Activated T-helper 2 cell treated with anti-CD3 and anti-CD28 coated beads, Interferon-gamma antibody, Interleukin-2, Interleukin-4, amounts not matched to agents 10 μg/mL and 5 μg/mL and 100 μg/mL, durations not matched to agents 14 hours and 24 hours and 36 hours (primary cell): ENCODE measurements at regions of chr12 and their contacts with region 1.

Region 1: DNA sequence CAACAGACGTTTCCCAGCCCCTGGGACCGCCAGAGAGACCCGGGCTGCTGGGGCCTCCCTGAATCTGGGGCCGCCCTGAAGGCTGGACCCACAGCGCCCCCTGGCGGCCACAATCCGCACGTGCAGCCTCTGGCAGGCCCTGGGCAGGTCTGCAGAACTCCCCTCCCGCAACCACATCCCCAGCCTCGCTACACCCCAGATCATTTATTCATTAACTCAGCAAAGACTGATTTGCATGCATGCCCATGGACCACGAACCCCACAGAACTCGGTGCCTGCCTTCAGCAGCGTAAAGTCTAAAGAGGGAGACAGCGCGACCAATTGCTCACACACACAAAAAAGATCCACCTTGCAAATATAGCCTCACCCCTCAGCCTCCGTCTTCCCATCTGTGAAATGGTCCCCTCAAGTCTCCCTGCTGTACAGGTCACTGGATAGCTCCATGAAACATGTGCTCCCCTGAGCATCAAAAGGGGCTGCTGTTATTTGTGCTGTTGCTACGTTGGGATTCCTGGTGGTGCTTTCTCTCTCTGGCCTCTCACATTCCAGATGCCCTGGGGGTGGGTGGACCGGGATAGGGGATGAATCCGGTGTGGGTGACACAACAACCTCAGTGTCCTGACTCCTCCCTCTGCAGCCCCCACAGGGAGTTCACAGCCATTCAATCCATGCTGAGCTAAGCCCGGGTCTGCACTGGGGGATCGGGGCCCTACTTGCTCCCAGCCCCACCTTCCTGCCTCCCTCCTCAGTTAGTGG is 96.4 kb downstream of the SCARB1 start:
- DNase-seq: peak; percentile 73
- H3K4me3 Mint-ChIP-seq: no peak overlapping the region
- H3K27ac Mint-ChIP-seq: no peak overlapping the region
- H3K4me1 Mint-ChIP-seq: peaks cover 23% of the 10 kb centered on the region
- H3K27me3 Mint-ChIP-seq: peaks cover 24% of the 10 kb centered on the region

Region 2: GRCh38 chr12:124036674-124037109 is 730.6 kb before region 1 on chr12:
- intact Hi-C with region 1: loop called (anchors 1 kb)
- DNase-seq: peak; percentile 16
- H3K4me3 Mint-ChIP-seq: no peak overlapping the region
- H3K27ac Mint-ChIP-seq: no peak overlapping the region
- H3K4me1 Mint-ChIP-seq: no peaks in the 10 kb centered on the region
- H3K27me3 Mint-ChIP-seq: peaks cover 24% of the 10 kb centered on the region

Region 3: GRCh38 chr12:124388679-124389536 is 378.3 kb before region 1 on chr12:
- intact Hi-C with region 1: loop called (anchors 5 kb)
- DNase-seq: peak; percentile 43
- H3K4me3 Mint-ChIP-seq: peak overlapping the region; percentile 21
- H3K27ac Mint-ChIP-seq: no peak overlapping the region
- H3K4me1 Mint-ChIP-seq: peaks cover 22% of the 10 kb centered on the region
- H3K27me3 Mint-ChIP-seq: no peaks in the 10 kb centered on the region

Region 4: GRCh38 chr12:124567661-124568373 is 199.4 kb before region 1 on chr12:
- intact Hi-C with region 1: loop called (anchors 2 kb)
- DNase-seq: peak; percentile 75
- H3K4me3 Mint-ChIP-seq: peak overlapping the region; percentile 78
- H3K27ac Mint-ChIP-seq: peak overlapping the region; percentile 78
- H3K4me1 Mint-ChIP-seq: peaks cover 10% of the 10 kb centered on the region
- H3K27me3 Mint-ChIP-seq: peaks cover 3% of the 10 kb centered on the region

Region 5: GRCh38 chr12:124680863-124681778 is 86.1 kb before region 1 on chr12:
- intact Hi-C with region 1: loop called (anchors 5 kb)
- DNase-seq: peak; percentile 16
- H3K4me3 Mint-ChIP-seq: no peak overlapping the region
- H3K27ac Mint-ChIP-seq: no peak overlapping the region
- H3K4me1 Mint-ChIP-seq: peaks cover 30% of the 10 kb centered on the region
- H3K27me3 Mint-ChIP-seq: peaks cover 1% of the 10 kb centered on the region

Region 6: DNA sequence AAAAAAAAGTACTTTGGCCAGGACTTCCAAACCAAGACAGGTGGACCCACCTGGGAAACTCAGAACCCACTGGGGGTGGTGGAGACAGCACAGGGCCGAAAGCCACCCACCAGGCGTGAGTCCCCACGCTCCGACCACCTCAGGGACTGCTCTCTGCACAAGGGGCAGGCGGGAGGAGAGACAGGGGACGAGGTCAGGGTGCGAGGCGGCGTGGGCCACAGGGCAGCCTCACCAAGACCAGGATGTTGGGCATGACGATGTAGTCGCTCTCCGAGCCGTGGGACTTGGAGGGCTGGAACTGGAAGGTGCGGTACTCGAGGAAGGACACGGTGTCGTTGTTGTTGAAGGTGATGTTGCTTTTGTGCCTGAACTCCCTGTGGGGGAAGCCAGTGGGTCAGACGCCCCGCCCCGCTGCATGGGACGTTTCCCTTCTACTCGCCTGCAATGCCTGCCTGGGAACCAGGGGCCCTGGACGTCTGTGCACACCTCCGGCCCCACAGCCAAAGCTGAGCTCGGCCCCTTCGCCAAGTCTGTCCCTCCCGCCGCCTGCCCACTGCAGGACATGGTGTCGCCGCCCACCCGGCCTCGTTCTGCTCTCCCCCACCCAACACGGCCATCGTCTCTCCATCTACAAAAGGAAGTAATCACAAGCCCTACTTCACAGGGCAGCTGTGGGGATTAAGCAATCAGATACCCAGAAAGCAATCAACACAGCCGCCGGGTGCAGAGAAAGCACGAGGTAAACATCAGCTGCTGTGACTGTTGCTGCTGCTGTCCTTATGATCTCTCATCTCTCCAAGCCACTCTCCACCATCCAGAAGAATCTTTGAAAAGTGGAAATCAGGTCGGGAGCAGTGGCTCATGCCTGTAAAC is 47.7 kb after region 1 on chr12:
- intact Hi-C with region 1: no loop called
- DNase-seq: no peak
- H3K4me3 Mint-ChIP-seq: no peak overlapping the region
- H3K27ac Mint-ChIP-seq: no peak overlapping the region
- H3K4me1 Mint-ChIP-seq: no peaks in the 10 kb centered on the region
- H3K27me3 Mint-ChIP-seq: no peaks in the 10 kb centered on the region

Region 7: GRCh38 chr12:124979568-124979967 is 212.3 kb after region 1 on chr12:
- intact Hi-C with region 1: no loop called
- DNase-seq: no peak
- H3K4me3 Mint-ChIP-seq: no peak overlapping the region
- H3K27ac Mint-ChIP-seq: no peak overlapping the region
- H3K4me1 Mint-ChIP-seq: peaks cover 4% of the 10 kb centered on the region
- H3K27me3 Mint-ChIP-seq: no peaks in the 10 kb centered on the region